ENCODE measurements at regions of chr20 and their contacts with region 1.

Region 1: GRCh38 chr20:53750827-53751619 is 157.4 kb upstream of the ZNF217 start:
- DNase-seq: peak; percentile 89
- H3K4me3 Mint-ChIP-seq: peak overlapping the region; percentile 51
- H3K27ac Mint-ChIP-seq: peak overlapping the region; percentile 98
- H3K4me1 Mint-ChIP-seq: peaks cover 63% of the 10 kb centered on the region
- H3K27me3 Mint-ChIP-seq: no peaks in the 10 kb centered on the region

Region 2: GRCh38 chr20:53643031-53643832 is 107.8 kb before region 1 on chr20:
- intact Hi-C with region 1: loop called (anchors 5 kb)
- DNase-seq: peak; percentile 91
- H3K4me3 Mint-ChIP-seq: peak overlapping the region; percentile 81
- H3K27ac Mint-ChIP-seq: peak overlapping the region; percentile 98
- H3K4me1 Mint-ChIP-seq: peaks cover 37% of the 10 kb centered on the region
- H3K27me3 Mint-ChIP-seq: no peaks in the 10 kb centered on the region

Region 3: DNA sequence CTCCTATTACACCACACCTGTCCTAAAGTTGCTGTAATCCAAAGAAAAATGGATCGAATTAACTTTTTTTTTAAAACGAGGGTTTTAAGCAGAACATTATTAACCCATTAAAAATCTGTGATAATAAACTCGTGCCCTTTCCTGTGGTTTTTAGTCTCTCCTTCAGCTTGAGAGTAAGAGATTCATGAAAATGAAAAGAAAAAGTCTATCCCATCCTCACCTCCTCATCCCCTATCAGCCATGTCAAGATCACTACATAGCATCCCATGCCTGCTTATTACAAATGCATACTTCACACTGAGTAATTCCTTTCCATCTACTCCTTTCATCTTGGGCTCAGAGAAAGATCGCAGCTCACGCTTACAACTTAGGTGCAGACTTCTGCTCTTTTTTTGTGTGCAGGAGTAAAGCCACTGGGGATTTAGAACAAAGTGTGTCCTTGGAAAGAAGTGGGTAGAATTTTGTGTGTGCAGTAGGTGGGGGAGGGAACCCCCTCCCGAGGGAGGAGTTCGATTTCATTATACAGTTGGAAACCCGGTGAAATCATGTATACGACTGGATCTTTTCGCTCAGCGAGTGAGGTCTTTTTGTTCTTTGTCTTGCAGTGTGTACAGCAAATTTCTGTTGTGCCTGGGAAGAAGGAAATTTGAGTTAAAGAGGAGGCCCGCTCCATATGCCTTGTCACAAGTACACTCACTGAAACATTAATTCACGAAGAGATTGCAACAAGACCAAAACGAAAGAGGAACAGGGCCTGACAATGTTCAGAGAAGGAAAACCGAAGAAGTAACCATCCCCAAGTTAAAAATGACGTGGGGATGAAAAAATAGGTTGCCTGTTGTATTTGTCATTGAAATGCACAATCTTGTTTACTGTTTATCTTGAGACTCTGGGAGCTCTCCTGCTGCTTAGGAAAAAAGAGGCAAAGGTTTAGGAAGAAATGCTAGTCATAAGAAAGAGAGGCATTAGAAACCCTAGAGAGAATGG is 10.9 kb before region 1 on chr20:
- intact Hi-C with region 1: loop called (anchors 1 kb)
- DNase-seq: peak; percentile 75
- H3K4me3 Mint-ChIP-seq: peak overlapping the region; percentile 82
- H3K27ac Mint-ChIP-seq: peak overlapping the region; percentile 94
- H3K4me1 Mint-ChIP-seq: peaks cover 51% of the 10 kb centered on the region
- H3K27me3 Mint-ChIP-seq: no peaks in the 10 kb centered on the region

Region 4: DNA sequence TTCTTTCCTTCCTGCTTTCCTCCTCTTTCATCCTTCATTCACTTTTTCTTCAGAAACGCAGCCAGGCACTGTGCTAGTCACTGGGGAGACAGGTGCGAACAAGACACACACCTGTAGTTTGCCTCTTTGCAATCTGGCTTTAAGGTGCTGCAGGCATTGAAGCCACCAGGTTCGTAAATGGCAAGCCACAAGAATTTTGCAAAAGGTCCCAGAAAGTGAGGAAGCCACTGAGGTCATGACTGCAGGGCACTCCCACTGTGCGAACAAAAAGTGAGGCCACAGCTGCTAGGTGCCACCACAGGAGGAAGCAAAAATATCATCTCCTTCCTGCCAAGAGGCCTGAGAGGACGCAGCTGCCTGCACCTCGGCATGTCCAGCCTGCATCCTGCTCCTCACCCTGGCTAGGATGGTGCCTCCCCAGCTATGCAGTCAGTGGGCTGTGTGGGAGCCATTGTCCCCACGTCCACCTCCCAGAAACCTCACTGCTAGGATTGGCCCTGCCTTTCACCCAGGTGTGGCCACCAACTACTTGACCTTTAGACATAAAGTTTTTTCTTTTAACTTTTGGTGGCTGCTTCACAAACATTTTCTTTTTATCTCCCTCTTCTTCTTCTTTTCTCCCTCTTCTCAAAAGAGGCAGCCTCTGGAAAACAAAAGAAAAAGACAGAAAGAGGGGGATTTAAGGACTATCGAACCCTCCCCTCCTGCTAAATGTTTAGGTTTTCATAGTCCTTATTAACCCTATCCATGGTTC is 88.6 kb after region 1 on chr20:
- intact Hi-C with region 1: loop called (anchors 1 kb)
- DNase-seq: peak; percentile 88
- H3K4me3 Mint-ChIP-seq: peak overlapping the region; percentile 85
- H3K27ac Mint-ChIP-seq: peak overlapping the region; percentile 98
- H3K4me1 Mint-ChIP-seq: peaks cover 58% of the 10 kb centered on the region
- H3K27me3 Mint-ChIP-seq: no peaks in the 10 kb centered on the region

Region 5: GRCh38 chr20:53915446-53916172 is 164.6 kb after region 1 on chr20:
- intact Hi-C with region 1: loop called (anchors 5 kb)
- DNase-seq: peak; percentile 97
- H3K4me3 Mint-ChIP-seq: peak overlapping the region; percentile 93
- H3K27ac Mint-ChIP-seq: peak overlapping the region; percentile 91
- H3K4me1 Mint-ChIP-seq: peaks cover 37% of the 10 kb centered on the region
- H3K27me3 Mint-ChIP-seq: no peaks in the 10 kb centered on the region

Region 6: DNA sequence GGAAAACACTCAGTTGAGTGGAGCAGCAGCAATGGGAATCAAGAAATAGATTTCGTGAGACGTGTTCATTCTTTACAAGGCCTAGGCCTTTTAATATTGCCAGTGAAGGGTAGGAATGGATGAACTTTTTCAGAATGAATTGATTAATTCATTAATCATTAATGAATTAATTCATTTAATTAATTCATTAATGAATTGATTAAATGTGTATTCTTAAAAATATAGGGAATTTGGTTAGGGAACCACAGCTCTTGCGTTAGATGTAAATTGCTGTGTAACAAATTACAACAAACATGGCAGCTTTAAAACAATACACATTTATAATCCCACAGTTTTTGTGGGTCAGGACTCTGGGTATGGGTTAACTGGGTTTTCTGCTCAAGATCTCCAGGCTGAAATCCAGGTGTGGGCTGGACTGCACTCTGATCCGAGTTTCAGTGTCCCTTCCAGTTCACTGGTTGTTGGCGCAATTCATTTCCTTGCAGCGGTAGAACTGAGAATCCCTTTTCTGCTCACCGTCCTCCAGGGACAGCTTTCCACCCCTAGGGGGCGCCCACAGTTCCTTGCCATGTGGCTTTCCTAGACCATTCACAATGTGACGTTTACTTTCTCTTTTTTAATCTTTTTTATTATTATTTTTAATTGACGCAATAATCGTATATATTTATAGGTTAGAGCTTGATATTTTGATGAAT is 352.2 kb after region 1 on chr20:
- intact Hi-C with region 1: no loop called
- DNase-seq: peak; percentile 92
- H3K4me3 Mint-ChIP-seq: no peak overlapping the region
- H3K27ac Mint-ChIP-seq: no peak overlapping the region
- H3K4me1 Mint-ChIP-seq: peaks cover 4% of the 10 kb centered on the region
- H3K27me3 Mint-ChIP-seq: peaks cover 9% of the 10 kb centered on the region